Prostate gland (tissue), 2 donors: ENCODE measurements at regions of chr6 and their contacts with region 1.

Region 1: GRCh38 chr6:16238057-16238962 is at the start of gene GMPR:
- DNase-seq: peak; percentile 79
- H3K4me3 ChIP-seq: peak within 1 kb of the TSS; percentile 53 to 55
- H3K27ac ChIP-seq: peak within 1 kb of the TSS; percentile 83 to 86
- H3K4me1 ChIP-seq: peaks cover 10% of the 10 kb centered on the region
- H3K27me3 ChIP-seq: no peaks in the 10 kb centered on the region
- CTCF ChIP-seq: peak in 1 of 4 experiments; percentile 16
- POLR2A ChIP-seq: peak; percentile 59
- total RNA-seq, gene GMPR: 228 to 266 TPM

Region 2: DNA sequence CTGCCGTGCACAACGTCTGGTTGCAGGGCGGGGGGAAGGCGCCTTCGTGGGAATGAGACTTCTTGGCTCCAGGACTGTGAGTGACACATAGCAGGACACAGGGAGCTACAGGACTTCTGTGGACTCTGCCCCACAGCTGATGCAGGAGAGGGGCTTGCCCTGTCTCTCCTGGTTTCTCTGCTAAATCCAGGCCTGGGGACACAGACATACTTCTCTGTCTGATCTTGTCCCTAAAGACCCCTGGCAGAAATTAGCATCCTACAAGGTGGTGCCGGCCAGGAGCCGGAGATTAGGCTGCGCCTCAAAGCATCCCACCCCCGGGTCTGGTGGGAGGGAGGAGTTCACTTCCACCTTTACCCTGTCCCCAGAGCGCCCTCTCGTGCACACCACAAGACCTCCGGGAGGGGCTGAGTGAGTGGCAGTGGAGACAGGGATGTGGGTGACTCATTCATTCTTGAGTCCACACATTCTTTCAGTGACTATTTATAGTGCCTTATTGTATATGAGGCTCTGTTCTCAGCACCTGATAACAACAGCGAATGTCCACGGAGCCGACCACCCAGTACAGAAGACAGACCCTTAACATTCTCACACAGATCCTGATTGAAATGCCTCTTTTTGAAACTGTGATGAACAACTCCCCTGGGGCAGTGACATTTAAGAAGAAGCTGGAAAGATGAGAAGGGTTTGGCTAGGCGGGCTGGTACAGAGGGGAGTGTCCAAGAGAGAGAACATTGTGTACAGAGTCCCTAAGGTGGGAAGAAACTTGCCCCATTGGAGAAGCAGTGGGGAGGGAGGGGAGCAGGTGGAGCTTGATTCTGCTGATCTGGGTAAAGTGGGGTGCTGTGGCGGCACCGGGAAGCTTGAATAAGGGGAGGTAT is 39.0 kb after region 1 on chr6:
- intact Hi-C with region 1: loop called (anchors 2 kb)
- DNase-seq: peak; percentile 65
- H3K4me3 ChIP-seq: no peak overlapping the region
- H3K27ac ChIP-seq: peak overlapping the region; percentile 40 to 56
- H3K4me1 ChIP-seq: peaks cover 12% of the 10 kb centered on the region
- H3K27me3 ChIP-seq: no peaks in the 10 kb centered on the region
- CTCF ChIP-seq: peak in 3 of 4 experiments; percentile 15 to 47 (median 36)
- POLR2A ChIP-seq: no peak

Region 3: GRCh38 chr6:16319813-16320532 is 81.7 kb after region 1 on chr6:
- intact Hi-C with region 1: loop called (anchors 5 kb)
- DNase-seq: peak; percentile 63
- H3K4me3 ChIP-seq: no peak overlapping the region
- H3K27ac ChIP-seq: peak overlapping the region; percentile 55 to 64
- H3K4me1 ChIP-seq: peaks cover 11% of the 10 kb centered on the region
- H3K27me3 ChIP-seq: no peaks in the 10 kb centered on the region
- CTCF ChIP-seq: no peak
- POLR2A ChIP-seq: no peak

Region 4: DNA sequence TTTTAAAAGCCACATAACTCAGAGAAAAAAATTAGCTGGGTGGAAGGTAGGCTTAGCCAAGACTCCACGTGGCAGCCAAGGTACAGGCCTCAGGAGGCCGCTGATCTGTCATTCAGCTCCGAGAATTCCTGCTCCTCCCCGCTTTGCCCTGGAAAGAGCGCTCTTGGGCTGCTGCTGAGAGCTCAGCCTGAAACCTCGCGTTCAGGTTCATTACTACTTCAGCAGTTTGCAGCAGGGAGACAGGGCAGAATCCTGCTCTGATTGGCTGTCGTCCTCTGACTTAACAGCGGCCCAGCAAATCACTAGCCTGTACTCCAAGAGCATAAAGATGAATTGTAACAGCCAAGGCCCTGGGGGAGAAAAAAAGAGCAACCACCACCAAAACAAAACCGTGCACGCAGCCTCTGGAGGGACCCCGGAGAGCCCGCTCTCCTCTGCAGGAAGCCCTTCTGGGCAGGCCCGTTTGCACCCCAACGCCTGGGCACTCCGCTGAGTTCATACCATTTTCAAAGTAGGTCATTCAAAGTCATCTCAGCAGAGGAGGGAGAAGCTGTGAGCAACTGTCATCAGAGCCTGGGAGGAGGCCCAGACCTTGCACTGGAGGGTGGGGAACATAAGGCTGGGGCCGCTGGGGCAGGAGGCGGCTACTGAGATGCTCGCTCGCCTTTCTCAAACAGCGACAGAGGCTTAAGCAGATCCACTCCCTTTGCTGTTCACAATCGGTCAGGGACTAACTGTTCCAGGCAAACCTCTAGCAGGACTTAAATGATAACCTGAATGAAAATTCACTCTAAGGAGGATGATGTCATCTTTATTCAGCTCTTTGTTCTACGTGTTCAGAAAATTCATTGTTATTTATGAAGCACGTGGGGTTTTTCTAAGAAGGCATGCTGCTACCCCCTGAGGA is 565.2 kb after region 1 on chr6:
- intact Hi-C with region 1: no loop called
- DNase-seq: no peak
- H3K4me3 ChIP-seq: no peak overlapping the region
- H3K27ac ChIP-seq: peak overlapping the region in 1 of 2 donors; percentile 11
- H3K4me1 ChIP-seq: no peaks in the 10 kb centered on the region
- H3K27me3 ChIP-seq: no peaks in the 10 kb centered on the region
- CTCF ChIP-seq: no peak
- POLR2A ChIP-seq: no peak